ENCODE measurements at regions of chr14 and their contacts with region 1.

Region 1: GRCh38 chr14:21498553-21499526 is 12.3 kb downstream of the METTL3 start:
- DNase-seq: no peak
- ATAC-seq: peak; percentile 64 to 77 (median 70)
- H3K4me3 ChIP-seq: no peak overlapping the region
- H3K27ac ChIP-seq: no peak overlapping the region
- H3K4me1 ChIP-seq: no peaks in the 10 kb centered on the region
- H3K27me3 ChIP-seq: no peaks in the 10 kb centered on the region
- CTCF ChIP-seq: peak; percentile 44 to 53 (median 46)
- POLR2A ChIP-seq: no peak

Region 2: GRCh38 chr14:21557084-21557901 is 58.5 kb after region 1 on chr14:
- intact Hi-C with region 1: loop called in 1 of 2 experiments (anchors 10 kb)
- DNase-seq: peak in 2 of 3 donors; percentile 28 to 68
- ATAC-seq: peak; percentile 91 to 97 (median 95)
- H3K4me3 ChIP-seq: peak overlapping the region in 2 of 3 donors; percentile 37 to 39
- H3K27ac ChIP-seq: peak overlapping the region in 1 of 3 donors; percentile 26
- H3K4me1 ChIP-seq: peaks cover 0 to 5% (median 0%) of the 10 kb centered on the region in 4 donors
- H3K27me3 ChIP-seq: no peaks in the 10 kb centered on the region
- CTCF ChIP-seq: peak; percentile 67 to 73 (median 68)
- POLR2A ChIP-seq: no peak

Region 3: DNA sequence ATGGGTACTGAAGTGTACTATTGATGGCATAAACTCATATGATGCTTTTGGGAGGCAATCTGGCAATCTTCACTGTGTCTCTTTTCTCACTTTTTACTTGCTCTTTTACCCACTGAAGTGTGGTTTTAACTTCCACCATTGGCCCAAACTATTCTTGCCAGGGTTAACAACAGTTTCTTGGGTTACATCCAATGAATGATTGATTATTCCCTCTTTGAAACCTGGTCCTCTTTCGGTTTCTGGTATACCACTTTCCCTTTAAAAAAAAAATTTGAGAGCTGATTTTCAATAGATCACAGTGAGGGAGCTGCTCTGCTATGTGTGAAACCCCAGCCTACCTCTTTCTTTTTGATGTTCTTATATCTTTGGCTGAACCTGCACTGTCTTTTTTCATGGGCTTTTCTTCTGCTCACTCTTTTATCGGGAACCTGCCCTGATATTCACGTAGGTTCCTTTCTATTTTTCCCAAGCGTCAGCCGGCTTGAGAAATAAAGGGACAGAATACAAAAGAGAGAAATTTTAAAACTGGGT is 230.9 kb after region 1 on chr14:
- intact Hi-C with region 1: no loop called
- DNase-seq: no peak
- ATAC-seq: peak; percentile 47 to 64 (median 55)
- H3K4me3 ChIP-seq: no peak overlapping the region
- H3K27ac ChIP-seq: no peak overlapping the region
- H3K4me1 ChIP-seq: no peaks in the 10 kb centered on the region
- H3K27me3 ChIP-seq: no peaks in the 10 kb centered on the region
- CTCF ChIP-seq: no peak
- POLR2A ChIP-seq: no peak

Region 4: DNA sequence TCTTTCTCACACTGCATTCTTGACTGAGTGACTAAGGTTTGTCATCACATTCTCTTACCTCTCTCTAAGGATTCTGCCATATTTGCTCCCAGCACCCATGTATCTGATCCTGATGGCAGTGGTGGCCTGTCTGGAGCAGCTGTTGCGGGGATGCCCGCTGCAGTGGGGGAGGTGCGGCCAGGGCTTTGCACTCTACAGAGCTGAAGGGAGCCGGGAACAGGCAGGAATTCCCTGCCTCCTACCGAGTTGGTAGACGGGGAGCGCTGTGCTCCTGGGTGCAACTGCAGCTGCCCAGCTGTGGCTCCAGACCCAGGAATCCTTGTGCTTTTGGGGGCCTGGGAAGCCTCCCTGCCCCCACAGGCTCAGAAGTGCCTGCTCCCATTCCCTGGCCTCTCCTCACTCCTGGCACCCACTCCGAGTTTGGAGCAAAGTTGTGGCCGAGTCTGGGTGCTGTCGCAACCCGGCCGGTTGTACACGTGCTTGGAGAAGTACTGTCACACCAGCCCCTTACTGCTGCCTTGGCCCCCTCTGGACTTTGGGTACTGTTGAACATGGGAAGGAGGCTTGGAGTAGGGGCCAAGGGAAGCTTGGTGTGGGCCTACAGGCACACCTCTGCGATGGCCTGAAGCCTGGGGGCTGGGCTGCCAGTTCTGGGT is 281.7 kb after region 1 on chr14:
- intact Hi-C with region 1: no loop called
- DNase-seq: no peak
- ATAC-seq: no peak
- H3K4me3 ChIP-seq: no peak overlapping the region
- H3K27ac ChIP-seq: no peak overlapping the region
- H3K4me1 ChIP-seq: no peaks in the 10 kb centered on the region
- H3K27me3 ChIP-seq: no peaks in the 10 kb centered on the region
- CTCF ChIP-seq: no peak
- POLR2A ChIP-seq: no peak

Measured in right lobe of liver (tissue), 6 donors.